Activated T-helper 1 cell treated with anti-CD3 and anti-CD28 coated beads, Interleukin-12 subunit alpha, Interleukin-12 subunit beta, Interleukin-2, Interleukin-4 antibody, amounts not matched to agents 30 ng/mL and 10 ng/mL and 1 ng/mL, durations not matched to agents 14 hours and 24 hours and 36 hours (primary cell): ENCODE measurements at regions of chr12 and their contacts with region 1.

Region 1: GRCh38 chr12:102769319-102769916 is 147.6 kb downstream of the PAH start:
- DNase-seq: peak; percentile 11
- H3K4me3 Mint-ChIP-seq: no peak overlapping the region
- H3K27ac Mint-ChIP-seq: no peak overlapping the region
- H3K4me1 Mint-ChIP-seq: no peaks in the 10 kb centered on the region
- H3K27me3 Mint-ChIP-seq: peaks cover 12% of the 10 kb centered on the region

Region 2: DNA sequence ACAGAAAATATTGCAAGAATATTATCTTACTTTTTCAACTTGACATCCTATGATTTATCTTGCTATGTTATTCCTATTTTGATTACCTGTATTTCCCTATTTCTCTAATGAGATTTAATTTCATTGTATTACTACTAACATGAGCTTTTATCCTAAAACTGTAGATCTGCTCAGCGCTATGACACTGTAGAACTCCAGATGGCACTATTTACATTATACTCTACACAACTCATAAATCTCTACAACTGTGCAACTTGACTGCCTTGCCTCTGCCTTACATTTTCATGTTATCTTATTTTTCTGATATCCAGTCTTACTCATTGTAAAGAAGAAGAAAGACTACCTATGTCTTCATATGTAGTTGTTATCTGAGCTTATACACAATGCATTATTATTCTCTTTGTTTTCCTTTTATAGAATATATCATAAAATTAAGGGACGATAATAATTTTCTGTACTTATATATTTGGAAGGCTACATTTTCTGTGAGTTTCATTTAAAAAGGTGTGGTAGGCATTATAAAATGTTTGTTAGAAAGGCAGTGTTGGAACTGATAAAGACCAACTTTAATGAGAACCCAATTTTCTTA is 673.6 kb before region 1 on chr12:
- intact Hi-C with region 1: loop called (anchors 1 kb)
- DNase-seq: no peak
- H3K4me3 Mint-ChIP-seq: no peak overlapping the region
- H3K27ac Mint-ChIP-seq: no peak overlapping the region
- H3K4me1 Mint-ChIP-seq: peaks cover 16% of the 10 kb centered on the region
- H3K27me3 Mint-ChIP-seq: no peaks in the 10 kb centered on the region

Region 3: DNA sequence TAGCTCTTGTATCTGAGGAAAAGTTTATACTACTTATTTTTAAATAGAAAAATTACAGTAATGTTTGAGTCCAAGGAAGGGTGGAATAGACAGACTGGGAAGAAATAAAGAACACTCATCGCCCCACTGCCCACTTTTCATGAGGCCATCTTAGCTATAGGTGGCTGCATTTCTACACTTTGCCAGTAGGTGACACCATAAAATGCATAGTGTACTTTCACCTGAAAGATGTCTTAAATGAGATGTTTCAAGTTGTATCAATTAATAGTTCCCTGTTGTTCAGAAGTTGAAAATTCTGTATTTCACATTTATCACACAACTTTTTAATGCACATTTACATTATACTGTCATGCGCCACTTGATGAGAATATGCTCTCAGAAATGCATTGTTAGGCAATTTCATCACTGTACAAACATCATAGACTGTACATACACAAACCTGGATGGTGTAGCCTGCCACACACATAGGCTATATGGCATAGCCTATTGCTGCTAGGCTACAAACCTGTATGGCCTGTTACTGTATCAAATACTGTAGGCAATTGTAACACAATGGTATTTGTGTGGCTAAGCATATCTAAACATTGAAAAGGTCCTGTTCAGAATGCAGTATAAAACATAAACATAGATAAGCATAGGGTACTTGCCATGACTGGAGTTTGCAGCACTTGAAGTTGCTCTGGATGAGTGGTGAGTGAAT is 599.3 kb before region 1 on chr12:
- intact Hi-C with region 1: loop called (anchors 1 kb)
- DNase-seq: no peak
- H3K4me3 Mint-ChIP-seq: no peak overlapping the region
- H3K27ac Mint-ChIP-seq: no peak overlapping the region
- H3K4me1 Mint-ChIP-seq: peaks cover 29% of the 10 kb centered on the region
- H3K27me3 Mint-ChIP-seq: no peaks in the 10 kb centered on the region

Region 4: DNA sequence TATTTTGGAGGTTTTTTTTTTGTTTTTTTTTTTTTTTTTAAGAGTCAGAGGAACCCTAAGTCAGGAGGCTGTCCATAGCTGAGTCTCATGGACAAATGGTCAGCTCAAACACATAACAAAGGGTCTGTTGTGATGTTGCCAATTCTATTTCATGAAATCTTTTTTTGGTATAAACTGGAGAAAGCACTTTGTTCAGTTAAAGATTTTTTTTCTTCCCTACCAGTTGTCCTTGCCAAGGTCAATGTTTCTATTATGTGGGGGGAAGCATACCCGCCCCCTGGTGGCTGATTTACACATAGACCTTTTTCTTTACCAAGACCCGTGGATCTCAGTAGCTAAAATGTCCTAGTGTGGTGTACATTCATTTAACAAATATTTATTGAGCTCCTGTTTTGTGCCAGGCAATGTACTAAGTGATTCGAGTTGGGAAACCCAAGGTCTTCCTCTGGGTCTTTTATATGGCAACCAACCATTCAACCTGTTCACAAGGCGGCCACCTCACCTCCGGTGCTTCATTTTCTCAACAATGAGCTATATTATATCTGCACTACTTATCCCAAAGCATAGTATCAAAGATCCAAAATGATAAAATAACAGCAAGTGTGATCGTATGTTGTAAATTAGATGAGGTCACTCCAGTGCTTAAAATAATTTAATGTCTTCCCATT is 66.8 kb before region 1 on chr12:
- intact Hi-C with region 1: loop called (anchors 1 kb)
- DNase-seq: peak; percentile 9
- H3K4me3 Mint-ChIP-seq: no peak overlapping the region
- H3K27ac Mint-ChIP-seq: no peak overlapping the region
- H3K4me1 Mint-ChIP-seq: no peaks in the 10 kb centered on the region
- H3K27me3 Mint-ChIP-seq: peaks cover 10% of the 10 kb centered on the region